ENCODE measurements at regions of chr13 and their contacts with region 1.

Region 1: DNA sequence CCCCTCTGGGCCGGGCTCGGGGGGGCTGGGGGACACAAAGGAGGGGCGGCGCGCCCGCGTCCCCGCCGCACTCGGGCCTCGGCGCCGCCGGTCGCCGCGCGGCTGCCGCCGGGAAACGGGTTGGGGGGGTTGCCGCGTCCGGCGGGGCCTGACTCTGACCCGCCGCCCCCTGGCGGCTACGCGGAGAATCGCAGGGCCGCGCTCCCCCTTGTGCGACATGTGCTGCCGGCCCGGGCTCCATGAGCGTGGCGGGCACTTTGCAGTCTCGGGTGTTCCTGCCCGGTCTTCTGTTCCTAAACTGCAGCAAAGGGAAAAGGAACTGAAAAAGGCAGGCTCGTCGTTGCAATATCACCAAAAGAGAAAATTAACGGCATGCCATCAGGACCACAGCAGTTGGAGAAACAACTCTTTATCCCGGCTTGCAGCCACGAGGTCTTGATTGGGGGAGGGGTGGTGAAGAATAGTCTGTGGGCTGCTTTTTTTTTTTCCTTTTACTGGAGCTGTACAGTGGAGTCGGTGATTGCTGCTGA is 1.5 kb downstream of the MIR17HG start:
- DNase-seq: peak; percentile 98
- H3K4me3 Mint-ChIP-seq: peak overlapping the region; percentile 100
- H3K27ac Mint-ChIP-seq: peak overlapping the region; percentile 99
- H3K4me1 Mint-ChIP-seq: peaks cover 36% of the 10 kb centered on the region
- H3K27me3 Mint-ChIP-seq: no peaks in the 10 kb centered on the region

Region 2: DNA sequence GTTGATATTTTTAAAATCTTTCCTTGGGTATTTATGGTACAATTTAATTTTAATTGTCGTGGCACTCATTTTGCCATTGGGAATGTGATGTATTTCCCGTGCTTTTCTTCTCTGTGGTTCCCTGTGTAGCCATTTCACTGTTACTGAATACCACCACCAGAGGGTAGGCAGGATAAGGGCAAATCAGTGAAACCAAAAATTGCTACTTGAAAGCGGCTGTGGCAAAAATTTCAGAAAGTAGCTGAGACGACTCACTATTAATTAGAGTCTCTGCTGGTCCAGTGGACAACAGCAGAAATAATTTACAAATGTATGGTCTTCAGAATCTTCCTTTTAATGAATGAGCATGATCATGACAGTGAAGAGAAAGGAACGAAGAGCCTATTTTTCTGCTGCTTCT is 35.9 kb before region 1 on chr13:
- intact Hi-C with region 1: loop called (anchors 1 kb)
- DNase-seq: peak; percentile 77
- H3K4me3 Mint-ChIP-seq: peak overlapping the region; percentile 52
- H3K27ac Mint-ChIP-seq: no peak overlapping the region
- H3K4me1 Mint-ChIP-seq: peaks cover 22% of the 10 kb centered on the region
- H3K27me3 Mint-ChIP-seq: peaks cover 14% of the 10 kb centered on the region

Region 3: DNA sequence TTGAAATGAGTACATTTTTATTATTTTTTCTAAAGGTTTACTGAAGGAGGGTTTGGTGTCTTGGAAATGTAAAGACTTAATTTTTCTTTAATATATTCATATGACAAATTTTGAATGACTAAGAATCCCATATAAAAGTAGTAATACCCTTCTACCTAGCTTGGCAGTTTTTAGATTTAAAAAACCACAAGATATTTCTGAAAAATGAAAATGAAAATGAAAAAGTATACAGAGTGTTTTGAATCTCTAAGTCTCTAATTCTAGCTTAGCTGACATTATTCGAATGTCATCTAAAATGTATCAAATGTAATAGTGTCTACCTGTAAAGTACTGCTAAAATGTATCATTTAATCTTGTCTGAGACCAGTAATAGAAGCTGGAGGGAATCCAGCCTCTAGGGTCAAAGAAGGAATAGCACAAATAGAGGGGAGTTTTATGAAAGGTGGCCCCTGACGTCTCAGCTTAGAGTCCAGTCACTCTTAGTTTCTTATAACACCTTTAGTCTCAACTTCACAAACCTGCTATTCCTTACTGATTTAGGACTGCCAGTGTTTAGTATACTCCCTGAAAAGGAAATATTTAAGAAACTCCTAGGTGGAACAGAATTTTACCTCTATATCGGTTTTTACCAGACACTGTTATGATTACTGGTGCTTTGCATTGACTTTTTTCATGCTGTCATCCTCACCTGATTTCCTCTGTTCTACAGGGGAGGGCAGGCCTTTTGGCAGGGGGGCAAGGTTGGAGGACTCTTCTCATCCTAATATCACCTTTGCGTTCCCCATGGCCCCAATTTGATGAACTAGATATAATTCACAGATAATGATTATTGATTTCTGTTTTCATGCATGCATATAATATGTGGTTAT is 17.7 kb before region 1 on chr13:
- intact Hi-C with region 1: loop called (anchors 1 kb)
- DNase-seq: no peak
- H3K4me3 Mint-ChIP-seq: peak overlapping the region; percentile 55
- H3K27ac Mint-ChIP-seq: peak overlapping the region; percentile 62
- H3K4me1 Mint-ChIP-seq: peaks cover 19% of the 10 kb centered on the region
- H3K27me3 Mint-ChIP-seq: peaks cover 5% of the 10 kb centered on the region

Region 4: DNA sequence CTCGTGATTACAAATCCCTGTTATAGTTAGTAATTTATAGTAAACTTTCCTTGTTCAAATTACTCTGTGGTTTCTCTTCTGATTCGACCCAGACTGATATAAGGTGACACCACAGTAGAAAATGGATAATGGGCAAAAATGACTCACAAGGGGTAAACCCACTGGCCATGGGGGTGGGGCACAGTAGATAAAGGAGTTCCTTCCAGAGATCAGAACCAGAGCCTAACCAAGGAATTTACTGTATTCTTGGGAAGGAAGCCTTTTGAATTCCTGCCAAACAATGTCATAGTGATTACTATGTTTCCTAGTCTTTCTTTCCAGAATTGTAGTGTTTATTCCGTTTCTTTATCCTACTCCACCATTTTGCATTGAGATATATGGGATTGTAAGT is 20.5 kb after region 1 on chr13:
- intact Hi-C with region 1: loop called (anchors 2 kb)
- DNase-seq: no peak
- H3K4me3 Mint-ChIP-seq: no peak overlapping the region
- H3K27ac Mint-ChIP-seq: no peak overlapping the region
- H3K4me1 Mint-ChIP-seq: peaks cover 23% of the 10 kb centered on the region
- H3K27me3 Mint-ChIP-seq: peaks cover 2% of the 10 kb centered on the region

Region 5: GRCh38 chr13:91398413-91399272 is 49.7 kb after region 1 on chr13 and contains the start of gene GPC5:
- intact Hi-C with region 1: loop called (anchors 1 kb)
- DNase-seq: peak; percentile 94
- H3K4me3 Mint-ChIP-seq: peak within 1 kb of the TSS; percentile 75
- H3K27ac Mint-ChIP-seq: no peak within 1 kb of the TSS
- H3K4me1 Mint-ChIP-seq: peaks cover 6% of the 10 kb centered on the region
- H3K27me3 Mint-ChIP-seq: peaks cover 77% of the 10 kb centered on the region
- total RNA-seq, gene GPC5: 0.07 TPM in 1 of 2 replicates, not detected in the other